ENCODE measurements at regions of chr6 and their contacts with region 1.

Region 1: GRCh38 chr6:13574571-13575376 is at the start of gene SIRT5:
- DNase-seq: peak; percentile 85
- CTCF ChIP-seq: no peak

Region 2: DNA sequence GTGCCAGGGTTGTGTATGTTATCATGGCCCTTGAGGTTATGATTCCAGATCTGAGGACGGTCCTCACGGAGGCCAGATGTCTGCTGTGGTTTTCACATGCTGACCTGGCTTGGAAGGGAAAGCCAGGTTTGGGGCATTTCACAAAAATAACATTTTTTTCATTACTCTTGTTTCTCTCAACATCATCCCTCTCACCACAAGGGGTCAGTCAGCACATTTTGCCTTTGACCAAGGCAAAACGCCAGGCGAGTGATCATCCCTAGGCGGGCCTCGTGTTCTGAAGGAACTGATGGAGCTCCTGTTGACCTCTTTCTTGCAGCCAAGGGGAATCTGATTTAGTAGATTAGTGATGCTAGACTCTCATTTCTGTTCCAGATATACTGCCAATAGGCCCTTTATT is 379.9 kb before region 1 on chr6:
- in situ Hi-C with region 1: loop called (anchors 25 kb)
- DNase-seq: peak; percentile 78
- CTCF ChIP-seq: peak; percentile 70